Left ventricle myocardium inferior (tissue), 1 donor: ENCODE measurements at regions of chr3 and their contacts with region 1.

Region 1: DNA sequence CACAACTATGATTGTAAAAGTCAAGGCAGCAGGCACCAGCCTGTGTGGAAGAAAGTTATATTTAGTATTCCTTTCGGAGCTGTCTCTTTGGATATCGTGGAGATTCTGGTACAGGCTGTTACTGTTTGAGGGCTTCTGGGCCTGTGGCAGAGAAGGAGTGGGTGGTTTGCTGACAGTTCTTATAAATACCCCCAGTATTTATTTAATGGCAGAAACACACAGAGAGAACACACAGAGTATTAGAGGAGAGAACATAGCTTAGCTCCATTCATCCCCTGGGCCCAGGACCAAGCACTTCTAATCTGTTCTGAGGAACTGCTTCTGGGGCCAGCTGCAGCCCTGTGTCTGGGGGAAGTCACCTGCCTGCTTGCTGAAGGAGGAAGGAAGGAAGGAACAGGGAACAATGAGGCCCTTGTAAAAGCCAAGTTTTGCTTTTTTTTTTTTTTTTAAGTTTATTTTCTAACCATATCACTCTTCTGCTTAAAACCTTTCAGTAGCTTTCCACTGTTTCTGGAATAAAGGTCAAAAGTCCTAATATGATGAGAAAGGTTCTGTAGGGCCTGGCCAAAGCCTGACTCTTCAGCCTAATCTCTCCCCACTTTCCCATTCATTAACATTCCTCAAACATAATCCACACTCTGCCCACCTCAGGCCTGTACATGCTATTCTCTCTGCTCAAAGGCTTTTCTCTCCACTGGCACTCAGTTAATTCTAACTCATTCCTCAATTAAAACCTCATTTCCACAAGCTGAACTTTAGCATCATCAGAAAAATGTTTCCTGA is 11.8 kb upstream of the PP2D1 start:
- DNase-seq: peak; percentile 34
- H3K4me3 ChIP-seq: no peak overlapping the region
- H3K27ac ChIP-seq: peak overlapping the region; percentile 73
- H3K4me1 ChIP-seq: peaks cover 26% of the 10 kb centered on the region
- H3K27me3 ChIP-seq: no peaks in the 10 kb centered on the region
- CTCF ChIP-seq: no peak

Region 2: DNA sequence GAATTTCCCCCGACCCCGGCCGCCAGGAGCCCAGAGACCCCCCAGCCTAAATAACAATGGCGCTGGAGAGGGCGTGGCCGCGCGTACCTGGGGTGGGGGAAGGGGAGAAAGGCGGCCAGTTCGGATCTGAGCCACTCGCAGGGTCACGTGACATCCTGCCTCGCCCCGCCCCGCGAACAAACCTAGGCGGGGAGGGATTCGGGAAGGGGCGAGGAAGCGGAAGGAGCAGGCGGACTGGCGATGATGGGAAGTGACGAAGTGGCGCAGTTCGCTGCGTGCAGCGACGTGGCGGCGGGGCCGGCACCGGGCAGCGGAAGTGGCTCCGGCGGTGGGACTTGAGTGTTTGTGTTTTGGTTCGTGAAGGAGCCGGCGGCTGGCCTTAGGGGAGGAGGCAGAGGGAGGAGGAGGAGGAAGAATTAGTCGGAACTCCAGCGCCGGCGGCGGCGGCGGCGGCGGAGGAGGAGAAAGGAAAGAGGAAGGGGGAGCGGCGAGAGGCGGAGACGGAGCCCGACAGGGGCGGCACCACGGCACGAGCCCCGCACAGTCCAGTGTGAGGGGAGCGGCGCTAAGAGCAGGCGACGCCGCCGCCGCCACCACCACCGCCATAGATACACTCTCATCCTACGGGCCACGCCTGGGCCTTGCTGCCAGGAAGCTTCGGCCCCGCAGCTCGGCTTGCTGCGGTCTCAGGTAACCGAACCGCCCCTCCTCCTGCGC is 76.8 kb before region 1 on chr3 and contains the start of gene RAB5A:
- intact Hi-C with region 1: loop called (anchors 10 kb)
- DNase-seq: peak; percentile 97
- H3K4me3 ChIP-seq: peak within 1 kb of the TSS; percentile 86
- H3K27ac ChIP-seq: peak within 1 kb of the TSS; percentile 92
- H3K4me1 ChIP-seq: peaks cover 56% of the 10 kb centered on the region
- H3K27me3 ChIP-seq: no peaks in the 10 kb centered on the region
- CTCF ChIP-seq: peak; percentile 14
- total RNA-seq, gene RAB5A: 52.0 TPM